Stomach (tissue), 19 donors: ENCODE measurements at regions of chr7 and their contacts with region 1.

Region 1: GRCh38 chr7:39948956-39949928 is 814 bp upstream of the CDK13 start:
- DNase-seq: peak; percentile 98 to 100
- H3K4me3 ChIP-seq: peak overlapping the region; percentile 78 to 98 (median 92)
- H3K27ac ChIP-seq: peak overlapping the region; percentile 95 to 100 (median 99)
- H3K4me1 ChIP-seq: peaks cover 18 to 33% (median 27%) of the 10 kb centered on the region in 4 donors
- H3K27me3 ChIP-seq: no peaks in the 10 kb centered on the region
- CTCF ChIP-seq: peak in 1 of 7 experiments; percentile 15
- EP300 ChIP-seq: no peak
- POLR2A ChIP-seq: peak in 2 of 4 donors; percentile 85 to 94

Region 2: GRCh38 chr7:40057292-40057691 is 108.0 kb after region 1 on chr7:
- intact Hi-C with region 1: loop called (anchors 5 kb)
- DNase-seq: peak in 1 of 2 donors; percentile 29
- H3K4me3 ChIP-seq: no peak overlapping the region
- H3K27ac ChIP-seq: no peak overlapping the region
- H3K4me1 ChIP-seq: peaks cover 0 to 31% (median 10%) of the 10 kb centered on the region in 4 donors
- H3K27me3 ChIP-seq: no peaks in the 10 kb centered on the region
- CTCF ChIP-seq: no peak
- EP300 ChIP-seq: no peak
- POLR2A ChIP-seq: no peak

Region 3: GRCh38 chr7:40134428-40135316 is 185.4 kb after region 1 on chr7 and contains the starts of genes MPLKIP and SUGCT:
- intact Hi-C with region 1: loop called (anchors 10 kb)
- DNase-seq: peak; percentile 86 to 95
- H3K4me3 ChIP-seq: peak within 1 kb of the TSS; percentile 89 to 95 (median 91)
- H3K27ac ChIP-seq: peak within 1 kb of the TSS; percentile 90 to 96 (median 93)
- H3K4me1 ChIP-seq: peaks cover 5 to 41% (median 26%) of the 10 kb centered on the region in 4 donors
- H3K27me3 ChIP-seq: no peaks in the 10 kb centered on the region
- CTCF ChIP-seq: peak in 5 of 7 experiments; percentile 75 to 99 (median 98)
- EP300 ChIP-seq: no peak
- POLR2A ChIP-seq: no peak
- total RNA-seq, gene MPLKIP: 3.1 to 68.3 (median 8.9) TPM
- total RNA-seq, gene SUGCT: 0.87 to 8.0 (median 2.2) TPM in 4 of 5 donors, not detected in the other